Body of pancreas (tissue), 4 donors: ENCODE measurements at regions of chr7 and their contacts with region 1.

Region 1: GRCh38 chr7:151032936-151033863 is 5.0 kb downstream of the ABCB8 start:
- DNase-seq: no peak
- ATAC-seq: no peak
- H3K4me3 ChIP-seq: no peak overlapping the region
- H3K27ac ChIP-seq: no peak overlapping the region
- H3K4me1 ChIP-seq: peaks cover 5% of the 10 kb centered on the region
- H3K27me3 ChIP-seq: no peaks in the 10 kb centered on the region
- CTCF ChIP-seq: no peak
- POLR2A ChIP-seq: no peak

Region 2: GRCh38 chr7:150824379-150825177 is 208.6 kb before region 1 on chr7:
- intact Hi-C with region 1: no loop called
- DNase-seq: no peak
- ATAC-seq: no peak
- H3K4me3 ChIP-seq: no peak overlapping the region
- H3K27ac ChIP-seq: no peak overlapping the region
- H3K4me1 ChIP-seq: no peaks in the 10 kb centered on the region
- H3K27me3 ChIP-seq: no peaks in the 10 kb centered on the region
- CTCF ChIP-seq: no peak
- POLR2A ChIP-seq: no peak

Region 3: DNA sequence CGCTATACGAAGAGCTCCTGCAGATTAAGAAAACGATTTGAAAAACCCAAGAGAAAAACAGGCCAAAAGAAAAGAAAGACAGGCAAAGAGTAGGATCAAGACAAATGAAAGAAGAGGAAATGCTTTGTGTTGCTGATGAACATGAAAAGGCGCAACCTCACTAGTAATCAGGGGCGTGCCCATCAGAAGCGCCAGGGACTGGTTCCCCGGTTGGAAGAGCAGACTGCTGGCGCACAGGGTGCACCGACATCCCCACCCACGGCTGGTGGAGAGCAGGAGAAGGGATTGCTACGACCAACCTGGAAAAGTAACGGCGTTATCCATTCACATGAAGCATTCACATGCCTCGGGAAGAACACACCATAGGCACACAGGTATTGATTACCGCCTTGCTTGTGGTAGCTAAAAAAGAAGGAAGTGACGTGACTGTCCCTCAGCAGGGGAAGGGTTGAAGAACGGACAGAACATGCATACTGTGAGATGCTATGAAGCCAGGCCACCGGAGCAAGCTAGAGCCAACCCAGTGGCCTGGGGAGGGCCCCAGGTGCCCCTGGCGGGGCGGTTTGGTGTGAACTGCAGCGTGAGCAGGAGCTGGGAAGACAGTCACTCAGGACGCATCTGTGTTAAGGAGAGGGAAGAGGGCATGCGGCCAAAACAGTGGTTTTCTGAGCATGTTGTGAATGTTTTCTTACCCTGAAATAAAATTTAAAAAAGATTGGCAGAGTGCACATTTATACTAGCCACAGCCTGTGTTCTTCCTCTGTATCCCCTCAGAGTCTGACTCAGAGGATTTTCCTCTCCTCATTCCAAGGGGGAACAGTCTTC is 71.4 kb after region 1 on chr7:
- intact Hi-C with region 1: loop called (anchors 5 kb)
- DNase-seq: no peak
- ATAC-seq: no peak
- H3K4me3 ChIP-seq: no peak overlapping the region
- H3K27ac ChIP-seq: no peak overlapping the region
- H3K4me1 ChIP-seq: no peaks in the 10 kb centered on the region
- H3K27me3 ChIP-seq: no peaks in the 10 kb centered on the region
- CTCF ChIP-seq: no peak
- POLR2A ChIP-seq: no peak

Region 4: GRCh38 chr7:152780935-152781334 is 1747.7 kb after region 1 on chr7:
- intact Hi-C with region 1: no loop called
- DNase-seq: no peak
- ATAC-seq: no peak
- H3K4me3 ChIP-seq: no peak overlapping the region
- H3K27ac ChIP-seq: no peak overlapping the region
- H3K4me1 ChIP-seq: no peaks in the 10 kb centered on the region
- H3K27me3 ChIP-seq: no peaks in the 10 kb centered on the region
- CTCF ChIP-seq: no peak
- POLR2A ChIP-seq: no peak